PC-9 (cell line): ENCODE measurements at regions of chr1 and their contacts with region 1.

Region 1: DNA sequence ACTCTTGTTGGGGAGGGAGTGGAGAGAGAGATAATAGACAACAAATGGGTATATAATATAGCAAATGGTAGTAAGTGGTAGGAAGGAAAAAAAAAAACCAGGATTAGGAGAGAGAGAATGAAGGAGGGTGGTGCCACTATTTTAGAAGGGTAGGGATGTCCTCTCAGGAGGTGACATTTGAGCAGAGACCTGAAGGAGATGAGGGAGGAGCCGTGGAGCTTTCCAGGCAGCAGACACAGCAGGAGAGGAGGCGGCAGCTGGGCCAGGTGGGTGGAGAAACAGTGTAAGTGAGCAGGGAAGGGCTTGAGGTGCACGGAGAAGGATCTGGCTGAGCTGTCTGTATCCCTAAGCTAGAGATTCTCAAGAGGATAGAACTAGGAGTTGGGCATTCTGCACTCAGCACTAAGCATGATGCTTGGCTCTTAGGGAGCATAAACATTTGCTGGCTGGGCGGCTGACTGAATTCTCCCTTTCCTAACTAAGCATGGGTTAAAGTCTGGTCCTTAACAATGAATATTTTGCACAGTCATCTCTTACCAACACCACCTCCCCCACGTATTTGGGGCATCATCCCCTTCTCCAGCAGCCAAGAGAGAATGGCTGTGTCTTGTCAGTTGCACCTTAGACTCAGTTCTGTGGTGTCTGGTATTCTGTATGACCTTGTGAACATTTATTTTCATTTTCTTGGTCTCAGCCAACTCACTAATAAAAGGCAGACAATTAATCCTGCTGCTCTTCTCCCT is 27.6 kb upstream of the SARS1 start:
- DNase-seq: peak in 1 of 2 experiments; percentile 9
- H3K4me3 ChIP-seq: no peak overlapping the region
- H3K27ac ChIP-seq: no peak overlapping the region
- H3K4me1 ChIP-seq: no peaks in the 10 kb centered on the region
- H3K27me3 ChIP-seq: no peaks in the 10 kb centered on the region
- CTCF ChIP-seq: no peak

Region 2: DNA sequence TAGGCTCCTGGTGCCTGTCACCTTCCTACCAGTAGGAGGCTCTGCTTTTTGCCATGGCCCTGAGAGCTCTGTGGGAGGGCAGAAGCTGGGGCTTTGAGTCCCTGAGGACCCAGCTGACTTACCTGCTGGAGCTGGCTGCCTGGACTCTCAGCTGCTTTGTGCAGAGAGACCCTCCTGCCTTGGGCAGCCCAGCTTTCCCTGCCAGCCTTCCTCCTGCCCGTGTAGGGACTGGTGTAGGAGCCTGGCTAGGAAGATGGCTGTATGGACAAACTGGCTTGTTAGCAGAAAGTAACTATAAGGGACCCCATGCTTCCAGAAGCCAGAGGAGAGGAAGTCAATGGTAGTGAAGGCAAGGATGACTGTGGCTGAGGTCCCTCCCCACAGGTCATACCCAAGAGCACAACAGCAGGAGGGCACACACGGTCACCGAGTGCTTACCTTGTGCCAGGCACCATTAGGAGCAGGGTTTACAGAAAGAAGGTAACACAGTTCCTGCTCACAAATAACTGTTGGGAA is 53.5 kb after region 1 on chr1:
- CTCF ChIA-PET with region 1: no interaction called
- POLR2A ChIA-PET with region 1: no interaction called
- intact Hi-C with region 1: no loop called
- DNase-seq: peak; percentile 36 to 66
- H3K4me3 ChIP-seq: no peak overlapping the region
- H3K27ac ChIP-seq: peak overlapping the region; percentile 92
- H3K4me1 ChIP-seq: peaks cover 38% of the 10 kb centered on the region
- H3K27me3 ChIP-seq: no peaks in the 10 kb centered on the region
- CTCF ChIP-seq: peak; percentile 80

Region 3: GRCh38 chr1:109277434-109278204 is 91.5 kb after region 1 on chr1:
- CTCF ChIA-PET with region 1: no interaction called
- POLR2A ChIA-PET with region 1: interaction called, 17 read pairs
- intact Hi-C with region 1: no loop called
- DNase-seq: peak; percentile 67 to 76
- H3K4me3 ChIP-seq: no peak overlapping the region
- H3K27ac ChIP-seq: peak overlapping the region; percentile 78
- H3K4me1 ChIP-seq: peaks cover 70% of the 10 kb centered on the region
- H3K27me3 ChIP-seq: no peaks in the 10 kb centered on the region
- CTCF ChIP-seq: peak; percentile 96

Region 4: GRCh38 chr1:109298666-109299557 is 112.8 kb after region 1 on chr1:
- CTCF ChIA-PET with region 1: no interaction called
- POLR2A ChIA-PET with region 1: no interaction called
- intact Hi-C with region 1: no loop called
- DNase-seq: peak; percentile 42 to 67
- H3K4me3 ChIP-seq: no peak overlapping the region
- H3K27ac ChIP-seq: no peak overlapping the region
- H3K4me1 ChIP-seq: 0 out of 2 replicates have a peak, but pooled peaks cover 4% of the 10 kb centered on the region
- H3K27me3 ChIP-seq: no peaks in the 10 kb centered on the region
- CTCF ChIP-seq: no peak

Region 5: GRCh38 chr1:109350655-109351054 is 164.5 kb after region 1 on chr1:
- CTCF ChIA-PET with region 1: no interaction called
- POLR2A ChIA-PET with region 1: interaction called, 11 read pairs
- intact Hi-C with region 1: no loop called
- DNase-seq: no peak
- H3K4me3 ChIP-seq: no peak overlapping the region
- H3K27ac ChIP-seq: no peak overlapping the region
- H3K4me1 ChIP-seq: no peaks in the 10 kb centered on the region
- H3K27me3 ChIP-seq: no peaks in the 10 kb centered on the region
- CTCF ChIP-seq: no peak